ENCODE measurements at regions of chr12 and their contacts with region 1.

Region 1: GRCh38 chr12:90978117-90978770 is 23.3 kb upstream of the CCER1 start:
- DNase-seq: no peak
- H3K4me3 Mint-ChIP-seq: no peak overlapping the region
- H3K27ac Mint-ChIP-seq: no peak overlapping the region
- H3K4me1 Mint-ChIP-seq: no peaks in the 10 kb centered on the region
- H3K27me3 Mint-ChIP-seq: peaks cover 8% of the 10 kb centered on the region

Region 2: GRCh38 chr12:90959538-90960139 is 18.6 kb before region 1 on chr12:
- CTCF ChIA-PET with region 1: no interaction called
- POLR2A ChIA-PET with region 1: no interaction called
- DNase-seq: peak; percentile 26
- H3K4me3 Mint-ChIP-seq: no peak overlapping the region
- H3K27ac Mint-ChIP-seq: no peak overlapping the region
- H3K4me1 Mint-ChIP-seq: no peaks in the 10 kb centered on the region
- H3K27me3 Mint-ChIP-seq: peaks cover 2% of the 10 kb centered on the region

Region 3: GRCh38 chr12:91074154-91074709 is 96.0 kb after region 1 on chr12:
- CTCF ChIA-PET with region 1: no interaction called
- POLR2A ChIA-PET with region 1: no interaction called
- DNase-seq: no peak
- H3K4me3 Mint-ChIP-seq: no peak overlapping the region
- H3K27ac Mint-ChIP-seq: no peak overlapping the region
- H3K4me1 Mint-ChIP-seq: no peaks in the 10 kb centered on the region
- H3K27me3 Mint-ChIP-seq: peaks cover 5% of the 10 kb centered on the region

Region 4: DNA sequence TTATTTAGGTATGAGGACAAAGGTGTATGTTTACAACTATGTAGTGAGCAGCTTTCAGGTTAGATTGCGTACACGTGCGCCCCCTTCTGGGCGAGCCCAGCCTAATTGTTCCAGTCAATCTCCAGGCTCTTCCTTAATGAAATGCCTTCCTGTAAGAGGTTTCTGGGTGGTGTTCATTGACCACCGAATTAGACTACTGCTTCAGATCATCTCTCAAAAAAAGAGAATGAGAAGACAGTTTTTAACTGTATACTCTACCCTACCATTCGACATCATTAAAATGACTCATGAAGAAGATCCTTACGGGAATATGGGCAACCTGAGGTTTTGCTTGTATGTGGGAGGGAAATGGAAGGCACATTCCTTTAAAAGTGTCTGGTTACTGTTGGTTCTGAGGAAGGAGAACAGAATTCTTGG is 130.9 kb after region 1 on chr12:
- CTCF ChIA-PET with region 1: interaction called, 16 read pairs
- POLR2A ChIA-PET with region 1: no interaction called
- DNase-seq: peak; percentile 62
- H3K4me3 Mint-ChIP-seq: no peak overlapping the region
- H3K27ac Mint-ChIP-seq: no peak overlapping the region
- H3K4me1 Mint-ChIP-seq: no peaks in the 10 kb centered on the region
- H3K27me3 Mint-ChIP-seq: no peaks in the 10 kb centered on the region

Region 5: DNA sequence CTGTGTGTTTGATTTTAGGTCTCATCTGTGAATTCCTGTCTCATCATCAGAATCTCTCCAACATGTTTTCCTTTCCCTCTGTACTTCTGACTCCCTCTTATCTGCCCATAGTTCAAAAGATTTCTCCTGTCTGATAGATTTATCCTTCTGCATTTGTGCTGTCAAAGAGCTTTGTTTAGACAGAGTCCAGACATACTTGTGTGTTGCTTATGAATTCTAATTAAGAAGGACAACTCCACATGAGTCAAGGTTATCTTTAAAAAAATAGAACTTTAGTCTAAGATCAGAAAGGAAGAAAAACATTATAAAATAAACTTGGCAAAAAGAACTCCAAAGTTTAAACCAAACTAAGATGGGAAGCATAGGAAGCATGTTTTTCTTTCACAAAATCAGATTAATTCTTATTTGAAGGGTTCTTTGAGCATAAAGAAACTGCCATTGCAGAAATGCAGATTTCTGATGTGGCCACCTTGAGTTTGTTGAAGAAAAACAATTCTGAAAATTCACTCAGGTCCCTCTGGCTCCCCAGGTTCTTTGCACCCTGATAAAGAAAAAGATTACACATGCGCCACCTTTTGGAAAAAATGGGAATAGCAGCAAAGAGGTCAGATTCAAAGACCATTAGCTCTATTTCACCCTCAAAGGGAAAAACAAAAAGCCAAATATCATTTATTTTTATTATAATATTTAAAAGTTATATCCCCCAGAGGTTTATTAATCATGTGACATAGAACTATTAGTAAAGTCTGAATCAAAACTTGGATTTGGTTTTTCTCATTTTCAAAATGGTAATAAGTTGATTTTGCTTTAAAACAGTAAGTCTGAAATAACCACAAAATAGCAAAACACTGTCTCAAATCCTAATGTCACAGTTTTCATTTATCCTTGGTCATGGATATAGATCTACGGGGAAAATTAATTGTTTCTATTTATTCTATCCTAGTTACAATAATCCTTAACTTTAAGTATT is 348.1 kb after region 1 on chr12:
- CTCF ChIA-PET with region 1: interaction called, 15 read pairs
- POLR2A ChIA-PET with region 1: no interaction called
- DNase-seq: peak; percentile 20
- H3K4me3 Mint-ChIP-seq: no peak overlapping the region
- H3K27ac Mint-ChIP-seq: no peak overlapping the region
- H3K4me1 Mint-ChIP-seq: no peaks in the 10 kb centered on the region
- H3K27me3 Mint-ChIP-seq: peaks cover 4% of the 10 kb centered on the region

Measured in activated CD4-positive, alpha-beta memory T cell treated with anti-CD3 and anti-CD28 coated beads, Interleukin-2, amount 10 ng/mL, durations not matched to agents 7 days and 5 days (primary cell).